ENCODE measurements at regions of chr7 and their contacts with region 1.

Region 1: DNA sequence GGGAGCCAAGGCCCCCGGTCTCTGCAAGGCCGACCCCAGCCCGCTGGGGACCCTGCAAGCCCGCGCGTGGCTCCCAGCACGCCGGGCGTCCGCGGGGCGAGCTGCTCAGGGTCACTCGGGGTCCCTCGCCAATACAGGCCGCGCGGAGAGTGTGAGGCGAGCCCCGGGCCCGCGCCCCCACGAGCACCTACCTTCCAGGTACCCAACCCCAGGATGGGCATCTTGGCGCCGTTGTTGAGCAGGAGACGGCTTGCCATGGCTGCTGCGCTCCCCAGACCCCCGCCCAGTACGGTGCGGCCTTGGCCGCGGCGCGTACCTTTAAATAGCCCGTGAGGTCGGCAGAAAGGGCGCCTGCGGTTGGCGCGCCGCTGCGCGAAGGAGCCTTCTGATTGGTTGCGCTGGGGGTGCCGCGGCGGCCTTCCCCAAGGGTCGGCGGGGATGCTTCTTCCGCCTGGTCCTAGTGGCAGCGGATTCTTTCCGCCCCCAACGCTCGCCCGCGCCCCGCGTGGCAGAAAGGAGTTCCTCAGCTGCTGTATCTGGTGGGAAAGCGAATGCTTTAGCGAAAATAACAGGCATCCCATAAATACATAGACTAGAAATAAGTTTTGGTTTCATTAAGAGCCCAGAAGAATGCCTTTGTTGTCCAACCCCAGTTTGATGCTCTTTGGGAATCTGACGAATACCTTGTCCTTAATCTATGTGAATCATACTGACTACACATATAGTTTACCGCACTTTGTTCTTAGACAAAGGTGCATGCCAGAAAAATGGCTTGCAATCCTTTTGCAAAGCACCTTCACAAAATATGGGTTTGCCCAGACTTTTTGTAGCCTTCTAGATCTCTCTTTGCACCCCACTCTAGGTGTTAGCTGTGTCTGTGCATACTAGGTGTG is at the start of gene AKR1B1:
- DNase-seq: peak; percentile 75 to 93 (median 87)
- ATAC-seq: peak; percentile 88
- H3K4me3 ChIP-seq: peak within 1 kb of the TSS; percentile 75 to 85
- H3K4me3 Mint-ChIP-seq: peak within 1 kb of the TSS; percentile 83
- H3K27ac ChIP-seq: peak within 1 kb of the TSS; percentile 63 to 74
- H3K27ac Mint-ChIP-seq: peak within 1 kb of the TSS; percentile 76
- H3K4me1 ChIP-seq: peaks cover 36% of the 10 kb centered on the region
- H3K4me1 Mint-ChIP-seq: peaks cover 47% of the 10 kb centered on the region
- H3K27me3 ChIP-seq: no peaks in the 10 kb centered on the region
- H3K27me3 Mint-ChIP-seq: no peaks in the 10 kb centered on the region
- CTCF ChIP-seq: peak; percentile 72
- total RNA-seq, gene AKR1B1: 63.9 to 67.6 TPM

Region 2: GRCh38 chr7:133252858-133253518 is 1206.1 kb before region 1 on chr7 and contains the start of gene EXOC4:
- CTCF ChIA-PET with region 1: no interaction called
- POLR2A ChIA-PET with region 1: no interaction called
- intact Hi-C with region 1: loop called in 1 of 2 experiments (anchors 2 kb)
- DNase-seq: peak; percentile 82 to 98 (median 89)
- ATAC-seq: peak; percentile 99
- H3K4me3 ChIP-seq: peak within 1 kb of the TSS; percentile 88
- H3K4me3 Mint-ChIP-seq: peak within 1 kb of the TSS; percentile 96
- H3K27ac ChIP-seq: peak within 1 kb of the TSS; percentile 83 to 92
- H3K27ac Mint-ChIP-seq: peak within 1 kb of the TSS; percentile 96
- H3K4me1 ChIP-seq: peaks cover 15% of the 10 kb centered on the region
- H3K4me1 Mint-ChIP-seq: peaks cover 44% of the 10 kb centered on the region
- H3K27me3 ChIP-seq: no peaks in the 10 kb centered on the region
- H3K27me3 Mint-ChIP-seq: no peaks in the 10 kb centered on the region
- CTCF ChIP-seq: no peak
- total RNA-seq, gene EXOC4: 47.9 to 50.5 TPM

Region 3: DNA sequence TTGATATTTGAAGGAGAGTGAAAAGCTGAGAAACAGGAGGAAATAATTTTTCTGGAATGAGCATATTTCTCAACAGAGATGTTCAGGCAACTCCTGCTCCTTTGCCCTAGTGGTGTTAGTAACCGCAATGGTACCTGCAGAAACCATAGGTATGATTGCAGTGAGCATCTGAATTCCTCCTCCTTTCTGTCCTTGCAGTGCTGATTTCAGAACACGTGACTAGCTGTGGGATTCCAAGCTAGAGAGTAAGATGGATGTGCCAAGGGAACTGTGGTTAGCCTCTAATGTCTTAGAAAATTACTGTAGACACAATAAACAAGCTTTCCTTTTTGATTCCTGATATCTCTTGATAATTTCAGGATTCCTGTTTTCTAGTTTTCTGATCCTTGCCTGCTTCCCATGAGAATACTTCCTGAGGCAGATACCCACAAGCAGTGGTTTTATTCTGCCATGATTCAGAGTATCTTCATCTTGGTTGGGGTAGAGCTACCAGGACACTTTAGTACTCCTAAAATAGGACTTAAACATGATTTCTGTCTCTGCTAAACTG is 304.4 kb before region 1 on chr7:
- CTCF ChIA-PET with region 1: no interaction called
- POLR2A ChIA-PET with region 1: no interaction called
- intact Hi-C with region 1: no loop called
- DNase-seq: no peak
- ATAC-seq: no peak
- H3K4me3 ChIP-seq: no peak overlapping the region
- H3K4me3 Mint-ChIP-seq: no peak overlapping the region
- H3K27ac ChIP-seq: no peak overlapping the region
- H3K27ac Mint-ChIP-seq: no peak overlapping the region
- H3K4me1 ChIP-seq: no peaks in the 10 kb centered on the region
- H3K4me1 Mint-ChIP-seq: no peaks in the 10 kb centered on the region
- H3K27me3 ChIP-seq: peaks cover 0 to 3% of the 10 kb centered on the region in 2 experiments
- H3K27me3 Mint-ChIP-seq: peaks cover 3% of the 10 kb centered on the region
- CTCF ChIP-seq: no peak

Region 4: DNA sequence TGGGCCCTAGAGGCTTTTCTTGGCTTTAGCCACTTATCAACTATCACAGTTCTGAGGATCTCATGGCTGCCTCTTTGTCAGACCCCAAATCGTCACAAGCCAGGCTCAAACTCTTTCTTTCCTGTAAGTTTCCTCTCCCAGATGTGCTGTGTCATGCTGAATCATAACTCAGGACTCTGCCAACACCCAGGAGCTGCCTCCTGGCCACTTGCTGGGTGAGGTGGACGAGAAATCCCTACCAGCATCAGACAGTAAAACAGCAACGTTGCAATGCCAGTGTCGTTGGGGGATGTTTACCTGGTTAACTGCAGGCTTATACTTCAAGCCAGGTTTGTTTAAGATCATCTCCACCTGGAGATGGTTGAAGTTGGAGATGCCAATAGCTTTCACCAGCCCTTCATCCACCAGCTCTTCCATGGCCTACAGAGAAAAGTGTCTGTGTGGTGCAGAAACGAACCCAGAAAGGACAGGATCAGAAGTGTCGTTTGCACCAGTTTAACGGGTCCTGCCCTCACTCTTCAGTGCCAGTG is 10.3 kb before region 1 on chr7:
- CTCF ChIA-PET with region 1: interaction called, 19 read pairs
- POLR2A ChIA-PET with region 1: interaction called, 7 read pairs
- intact Hi-C with region 1: no loop called
- DNase-seq: no peak
- ATAC-seq: no peak
- H3K4me3 ChIP-seq: no peak overlapping the region
- H3K4me3 Mint-ChIP-seq: no peak overlapping the region
- H3K27ac ChIP-seq: no peak overlapping the region
- H3K27ac Mint-ChIP-seq: no peak overlapping the region
- H3K4me1 ChIP-seq: peaks cover 2% of the 10 kb centered on the region
- H3K4me1 Mint-ChIP-seq: peaks cover 11% of the 10 kb centered on the region
- H3K27me3 ChIP-seq: no peaks in the 10 kb centered on the region
- H3K27me3 Mint-ChIP-seq: no peaks in the 10 kb centered on the region
- CTCF ChIP-seq: no peak

Region 5: GRCh38 chr7:134804351-134804750 is 345.3 kb after region 1 on chr7:
- CTCF ChIA-PET with region 1: no interaction called
- POLR2A ChIA-PET with region 1: no interaction called
- intact Hi-C with region 1: no loop called
- DNase-seq: no peak
- ATAC-seq: no peak
- H3K4me3 ChIP-seq: no peak overlapping the region
- H3K4me3 Mint-ChIP-seq: no peak overlapping the region
- H3K27ac ChIP-seq: no peak overlapping the region
- H3K27ac Mint-ChIP-seq: no peak overlapping the region
- H3K4me1 ChIP-seq: no peaks in the 10 kb centered on the region
- H3K4me1 Mint-ChIP-seq: no peaks in the 10 kb centered on the region
- H3K27me3 ChIP-seq: peaks cover 0 to 2% of the 10 kb centered on the region in 2 experiments
- H3K27me3 Mint-ChIP-seq: peaks cover 4% of the 10 kb centered on the region
- CTCF ChIP-seq: no peak

Region 6: DNA sequence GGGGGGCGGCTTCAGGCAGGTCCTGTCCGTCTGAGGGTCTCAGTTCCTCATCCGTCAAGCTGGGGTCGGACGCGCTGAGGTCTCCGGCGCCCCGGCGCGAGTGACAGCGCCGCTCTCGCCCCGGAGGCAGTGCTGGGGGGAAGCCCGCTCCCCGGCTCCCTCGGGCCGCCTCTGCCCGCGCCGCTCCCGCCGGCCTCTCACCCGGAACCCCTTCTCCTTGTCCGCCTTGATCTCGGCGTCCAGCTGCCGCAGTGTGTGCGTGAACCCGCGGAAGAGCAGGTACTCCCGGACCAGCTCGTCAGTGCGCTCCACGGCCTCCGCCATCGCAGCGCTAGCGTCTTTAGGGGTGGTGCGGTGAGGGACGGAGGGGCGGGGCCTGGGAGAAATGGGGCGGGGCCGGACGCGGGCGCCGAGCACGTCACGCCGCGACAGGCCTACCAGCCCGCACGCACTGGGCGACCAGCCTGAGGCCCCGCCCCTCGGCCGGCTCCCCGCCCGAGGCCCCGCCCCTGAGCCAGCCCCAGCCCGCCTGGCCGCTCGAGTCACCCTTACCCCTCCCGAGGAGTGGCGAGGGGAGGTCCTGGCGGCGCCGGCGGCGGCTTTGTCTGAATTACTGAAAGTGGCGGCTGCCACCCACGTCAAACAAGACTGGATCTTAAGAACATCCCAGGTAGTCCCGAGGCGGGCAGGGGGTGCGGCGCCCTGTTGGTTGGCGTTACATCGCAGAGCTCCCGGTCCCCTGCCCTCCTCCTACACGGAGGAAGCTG is 752.3 kb after region 1 on chr7 and contains the start of gene WDR91:
- CTCF ChIA-PET with region 1: no interaction called
- POLR2A ChIA-PET with region 1: no interaction called
- intact Hi-C with region 1: loop called in 1 of 2 experiments (anchors 1 kb)
- DNase-seq: peak; percentile 95 to 98 (median 96)
- ATAC-seq: peak; percentile 93
- H3K4me3 ChIP-seq: peak within 1 kb of the TSS; percentile 74 to 91
- H3K4me3 Mint-ChIP-seq: peak within 1 kb of the TSS; percentile 97
- H3K27ac ChIP-seq: peak within 1 kb of the TSS; percentile 80 to 91
- H3K27ac Mint-ChIP-seq: peak within 1 kb of the TSS; percentile 99
- H3K4me1 ChIP-seq: peaks cover 12% of the 10 kb centered on the region
- H3K4me1 Mint-ChIP-seq: peaks cover 42% of the 10 kb centered on the region
- H3K27me3 ChIP-seq: no peaks in the 10 kb centered on the region
- H3K27me3 Mint-ChIP-seq: no peaks in the 10 kb centered on the region
- CTCF ChIP-seq: no peak
- total RNA-seq, gene WDR91: 43.3 to 46.6 TPM

Region 7: DNA sequence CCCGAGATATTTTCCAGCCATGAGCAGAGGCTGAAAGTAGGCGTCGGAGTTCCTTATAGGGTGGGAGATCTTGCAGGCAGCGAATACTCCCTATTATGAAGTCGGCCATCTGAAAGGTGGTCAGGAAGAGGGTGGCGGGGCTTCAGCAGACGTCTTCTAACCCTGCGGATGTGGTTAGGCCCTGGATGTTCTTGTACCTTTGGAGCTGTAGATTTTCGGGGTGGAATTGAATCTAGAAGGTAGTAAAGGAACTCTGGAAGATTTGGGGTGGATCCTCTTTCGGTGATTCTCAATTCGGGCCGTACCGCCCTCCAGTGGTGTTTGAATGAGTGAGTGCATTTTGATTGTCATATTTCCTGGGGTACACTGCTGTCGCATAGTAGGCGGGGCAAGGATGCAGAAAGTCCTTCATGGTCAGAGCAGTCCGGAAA is 1099.3 kb after region 1 on chr7:
- CTCF ChIA-PET with region 1: no interaction called
- POLR2A ChIA-PET with region 1: no interaction called
- intact Hi-C with region 1: loop called in 1 of 2 experiments (anchors 5 kb)
- DNase-seq: peak; percentile 37 to 87 (median 68)
- ATAC-seq: peak; percentile 52
- H3K4me3 ChIP-seq: peak overlapping the region; percentile 85 to 86
- H3K4me3 Mint-ChIP-seq: no peak overlapping the region
- H3K27ac ChIP-seq: peak overlapping the region; percentile 90 to 98
- H3K27ac Mint-ChIP-seq: no peak overlapping the region
- H3K4me1 ChIP-seq: peaks cover 16% of the 10 kb centered on the region
- H3K4me1 Mint-ChIP-seq: peaks cover 17% of the 10 kb centered on the region
- H3K27me3 ChIP-seq: no peaks in the 10 kb centered on the region
- H3K27me3 Mint-ChIP-seq: no peaks in the 10 kb centered on the region
- CTCF ChIP-seq: peak; percentile 52

Region 8: GRCh38 chr7:135977007-135977741 is 1518.1 kb after region 1 on chr7 and contains the start of gene MTPN:
- CTCF ChIA-PET with region 1: no interaction called
- POLR2A ChIA-PET with region 1: no interaction called
- intact Hi-C with region 1: loop called (anchors 2 to 5 kb)
- DNase-seq: peak; percentile 94 to 98 (median 98)
- ATAC-seq: peak; percentile 81
- H3K4me3 ChIP-seq: peak within 1 kb of the TSS; percentile 89 to 93
- H3K4me3 Mint-ChIP-seq: peak within 1 kb of the TSS; percentile 92
- H3K27ac ChIP-seq: peak within 1 kb of the TSS; percentile 82 to 88
- H3K27ac Mint-ChIP-seq: peak within 1 kb of the TSS; percentile 93
- H3K4me1 ChIP-seq: peaks cover 71% of the 10 kb centered on the region
- H3K4me1 Mint-ChIP-seq: peaks cover 79% of the 10 kb centered on the region
- H3K27me3 ChIP-seq: no peaks in the 10 kb centered on the region
- H3K27me3 Mint-ChIP-seq: no peaks in the 10 kb centered on the region
- CTCF ChIP-seq: no peak
- total RNA-seq, gene MTPN: 91.9 to 101 TPM

Measured in CD8-positive, alpha-beta T cell (primary cell).